Endothelial cell of umbilical vein (primary cell): ENCODE measurements at regions of chr3 and their contacts with region 1.

Region 1: DNA sequence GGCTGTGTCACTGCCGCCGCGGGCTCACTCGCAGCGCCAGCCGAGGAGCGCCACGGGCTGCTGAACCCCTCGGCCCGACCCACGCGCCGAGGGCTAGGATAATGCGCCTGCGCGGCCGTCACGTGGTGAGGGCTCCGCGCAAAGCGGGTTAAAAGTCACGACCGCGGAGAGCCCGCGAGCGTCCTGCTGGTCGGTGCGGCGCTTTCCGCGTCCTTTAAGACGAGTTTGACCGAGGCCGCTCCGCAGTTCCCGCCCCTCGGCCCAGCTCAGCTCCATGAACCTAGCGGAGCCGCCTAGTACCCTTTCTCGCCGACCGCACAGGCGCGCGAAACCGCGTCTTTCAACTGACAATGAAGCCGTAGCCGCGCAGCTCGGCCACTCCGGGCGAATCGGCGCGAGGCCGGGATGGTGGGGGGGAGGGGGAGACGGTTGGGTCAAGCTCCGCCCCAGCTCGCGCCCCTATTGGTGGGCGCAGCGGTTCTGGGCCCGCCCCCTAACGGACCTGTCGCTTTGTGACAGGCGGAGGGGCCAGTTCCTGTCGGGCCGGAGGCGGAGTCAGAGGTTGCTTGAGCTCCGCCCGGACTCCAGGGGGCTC is 636 bp upstream of the STT3B start:
- DNase-seq: peak; percentile 98
- H3K4me3 ChIP-seq: peak overlapping the region; percentile 73 to 94 (median 74)
- H3K27ac ChIP-seq: peak overlapping the region; percentile 90
- H3K4me1 ChIP-seq: peaks cover 24% of the 10 kb centered on the region
- H3K27me3 ChIP-seq: peaks cover 12 to 15% of the 10 kb centered on the region in 2 experiments
- CTCF ChIP-seq: no peak
- POLR2A ChIP-seq: peak; percentile 98

Region 2: DNA sequence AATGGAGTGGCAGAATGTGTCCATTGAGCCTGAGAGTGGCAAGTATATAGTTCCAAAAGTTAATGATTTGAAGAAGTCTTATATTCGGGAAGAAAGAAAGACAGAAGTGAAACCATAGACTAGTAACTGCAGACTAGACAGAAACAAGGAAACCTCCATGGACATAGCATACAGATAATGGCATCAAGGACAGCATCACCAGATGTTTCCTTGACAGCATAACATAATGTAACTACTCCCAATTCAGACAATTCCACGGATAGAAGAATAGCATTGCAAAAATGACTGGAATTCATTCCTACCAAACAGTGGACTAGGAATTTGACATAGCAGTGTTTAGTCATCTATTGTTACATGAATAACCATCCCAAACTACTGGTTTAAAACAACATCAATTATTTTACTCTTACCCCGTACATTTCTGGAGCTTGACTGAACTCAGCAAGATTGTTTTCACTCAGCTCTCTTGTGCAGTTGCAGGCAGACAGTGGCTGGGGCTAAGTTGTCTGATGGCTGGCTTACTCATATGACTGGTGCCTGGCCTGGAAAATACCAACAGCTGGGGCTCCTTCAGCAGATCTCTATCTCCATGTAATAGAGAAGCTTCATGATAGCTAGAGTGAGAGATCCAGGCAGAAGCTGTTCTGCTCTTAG is 527.9 kb before region 1 on chr3:
- CTCF ChIA-PET with region 1: no interaction called
- POLR2A ChIA-PET with region 1: no interaction called
- dilution Hi-C with region 1: no loop called
- intact Hi-C with region 1: loop called (anchors 1 kb)
- DNase-seq: peak; percentile 72
- H3K4me3 ChIP-seq: no peak overlapping the region
- H3K27ac ChIP-seq: peak overlapping the region; percentile 85
- H3K4me1 ChIP-seq: peaks cover 15% of the 10 kb centered on the region
- H3K27me3 ChIP-seq: no peaks in the 10 kb centered on the region
- CTCF ChIP-seq: no peak
- POLR2A ChIP-seq: no peak

Region 3: DNA sequence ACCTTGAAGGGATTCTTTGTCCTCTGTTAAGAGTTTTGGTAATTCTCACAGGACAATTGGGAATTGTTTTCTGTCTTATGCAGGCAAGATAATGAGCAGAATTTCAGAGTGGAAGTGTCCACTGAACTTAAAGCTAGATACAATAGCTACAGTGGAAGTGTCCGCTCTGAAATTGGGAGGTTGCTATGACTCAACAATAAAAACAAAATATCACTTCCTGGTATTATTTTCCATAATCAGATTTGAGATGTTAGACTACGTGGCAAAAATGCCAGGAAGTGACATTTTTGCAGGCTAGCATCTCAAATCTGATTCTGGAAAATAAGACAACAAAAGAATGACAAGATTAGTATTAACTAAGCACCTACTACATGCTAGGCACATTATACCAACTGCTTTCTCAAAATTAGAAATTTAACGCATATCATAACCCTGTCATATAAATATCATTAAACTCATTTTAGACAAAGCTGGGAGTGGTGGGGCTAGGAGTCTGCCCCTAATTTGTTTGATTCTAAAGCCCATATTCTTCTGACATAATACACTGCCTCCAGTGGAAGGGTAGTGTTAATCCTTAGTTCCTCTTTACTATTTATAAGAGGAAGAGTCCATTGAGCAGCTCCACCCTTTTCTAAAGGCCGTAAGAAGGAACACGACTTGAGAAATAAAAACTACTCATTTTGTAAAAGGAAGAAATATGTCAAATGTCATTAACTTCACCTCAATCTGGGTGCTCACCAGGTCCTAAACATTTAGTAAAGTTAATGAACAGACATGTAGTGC is 266.3 kb before region 1 on chr3:
- CTCF ChIA-PET with region 1: interaction called, 8 read pairs
- POLR2A ChIA-PET with region 1: no interaction called
- dilution Hi-C with region 1: no loop called
- intact Hi-C with region 1: loop called (anchors 1 kb)
- DNase-seq: peak; percentile 87
- H3K4me3 ChIP-seq: no peak overlapping the region
- H3K27ac ChIP-seq: peak overlapping the region; percentile 93
- H3K4me1 ChIP-seq: peaks cover 17% of the 10 kb centered on the region
- H3K27me3 ChIP-seq: no peaks in the 10 kb centered on the region
- CTCF ChIP-seq: no peak
- POLR2A ChIP-seq: no peak

Region 4: GRCh38 chr3:31369637-31370379 is 162.3 kb before region 1 on chr3:
- CTCF ChIA-PET with region 1: no interaction called
- POLR2A ChIA-PET with region 1: no interaction called
- dilution Hi-C with region 1: no loop called
- intact Hi-C with region 1: no loop called
- DNase-seq: peak; percentile 24
- H3K4me3 ChIP-seq: no peak overlapping the region
- H3K27ac ChIP-seq: no peak overlapping the region
- H3K4me1 ChIP-seq: no peaks in the 10 kb centered on the region
- H3K27me3 ChIP-seq: no peaks in the 10 kb centered on the region
- CTCF ChIP-seq: no peak
- POLR2A ChIP-seq: no peak

Region 5: DNA sequence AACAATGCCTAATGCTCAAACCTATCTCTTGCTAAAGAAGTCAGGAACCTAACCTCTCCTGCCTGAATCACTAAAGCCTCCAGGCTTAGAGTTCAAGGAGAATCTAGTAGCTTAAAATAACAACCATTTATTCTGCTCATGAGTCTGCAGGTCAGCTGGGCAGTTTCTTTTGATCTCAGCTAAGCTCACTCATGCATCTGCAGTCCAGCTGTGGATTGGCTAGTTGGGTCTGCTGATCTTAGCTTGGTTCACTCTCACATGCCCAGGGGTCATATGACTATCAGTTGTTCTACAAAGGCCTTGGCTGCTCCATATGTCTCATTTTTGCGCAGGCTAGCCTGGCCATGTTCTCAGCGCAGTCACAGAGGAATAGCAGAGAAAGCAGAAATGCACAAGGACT is 108.6 kb before region 1 on chr3:
- CTCF ChIA-PET with region 1: no interaction called
- POLR2A ChIA-PET with region 1: no interaction called
- dilution Hi-C with region 1: no loop called
- intact Hi-C with region 1: no loop called
- DNase-seq: no peak
- H3K4me3 ChIP-seq: no peak overlapping the region
- H3K27ac ChIP-seq: no peak overlapping the region
- H3K4me1 ChIP-seq: no peaks in the 10 kb centered on the region
- H3K27me3 ChIP-seq: peaks cover 0 to 2% of the 10 kb centered on the region in 2 experiments
- CTCF ChIP-seq: no peak
- POLR2A ChIP-seq: no peak

Region 6: DNA sequence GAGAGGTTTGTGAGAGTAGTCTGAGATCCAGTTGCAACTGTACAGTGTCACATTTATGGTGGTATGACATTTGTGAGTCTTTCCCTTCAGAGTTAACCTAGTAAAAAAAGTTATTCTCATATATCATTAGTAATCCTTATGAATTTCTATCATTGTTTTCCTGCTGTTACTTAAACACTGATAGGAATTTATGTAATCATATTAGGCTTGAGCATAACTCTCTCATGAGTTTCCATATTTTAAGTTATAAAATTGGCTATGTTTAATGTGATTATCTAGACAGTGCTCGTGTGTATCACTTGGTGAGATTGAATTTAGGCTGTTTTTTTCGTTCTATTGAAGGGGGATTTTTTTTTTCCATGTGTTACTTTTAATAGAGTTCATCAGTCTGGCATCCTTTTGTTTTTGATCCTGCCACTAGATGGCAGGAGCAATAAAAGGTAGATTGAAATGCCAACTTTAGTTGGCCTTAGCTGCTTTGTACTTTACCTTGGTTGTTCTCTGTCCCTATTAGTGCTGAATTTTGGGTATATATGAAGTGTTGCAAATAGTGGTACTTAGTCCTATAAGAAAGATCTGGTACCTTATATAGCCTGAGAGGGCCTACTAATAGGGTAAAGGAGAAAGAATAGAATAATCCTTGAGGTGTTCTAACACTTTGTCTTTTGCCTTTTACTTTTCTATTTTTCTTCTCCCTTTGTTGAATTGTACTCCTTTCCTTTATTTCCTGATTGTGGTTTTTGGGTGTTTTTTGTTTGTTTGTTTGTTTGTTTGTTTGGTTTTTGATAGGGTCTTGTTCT is 18.6 kb after region 1 on chr3:
- CTCF ChIA-PET with region 1: interaction called, 15 read pairs
- POLR2A ChIA-PET with region 1: no interaction called
- dilution Hi-C with region 1: no loop called
- intact Hi-C with region 1: no loop called
- DNase-seq: peak; percentile 60
- H3K4me3 ChIP-seq: no peak overlapping the region
- H3K27ac ChIP-seq: no peak overlapping the region
- H3K4me1 ChIP-seq: no peaks in the 10 kb centered on the region
- H3K27me3 ChIP-seq: no peaks in the 10 kb centered on the region
- CTCF ChIP-seq: peak; percentile 42 to 57
- POLR2A ChIP-seq: no peak

Region 7: GRCh38 chr3:31733234-31733667 is 201.2 kb after region 1 on chr3:
- CTCF ChIA-PET with region 1: no interaction called
- POLR2A ChIA-PET with region 1: no interaction called
- dilution Hi-C with region 1: no loop called
- intact Hi-C with region 1: no loop called
- DNase-seq: peak; percentile 75
- H3K4me3 ChIP-seq: no peak overlapping the region
- H3K27ac ChIP-seq: no peak overlapping the region
- H3K4me1 ChIP-seq: peaks cover 3% of the 10 kb centered on the region
- H3K27me3 ChIP-seq: no peaks in the 10 kb centered on the region
- CTCF ChIP-seq: no peak
- POLR2A ChIP-seq: no peak

Region 8: DNA sequence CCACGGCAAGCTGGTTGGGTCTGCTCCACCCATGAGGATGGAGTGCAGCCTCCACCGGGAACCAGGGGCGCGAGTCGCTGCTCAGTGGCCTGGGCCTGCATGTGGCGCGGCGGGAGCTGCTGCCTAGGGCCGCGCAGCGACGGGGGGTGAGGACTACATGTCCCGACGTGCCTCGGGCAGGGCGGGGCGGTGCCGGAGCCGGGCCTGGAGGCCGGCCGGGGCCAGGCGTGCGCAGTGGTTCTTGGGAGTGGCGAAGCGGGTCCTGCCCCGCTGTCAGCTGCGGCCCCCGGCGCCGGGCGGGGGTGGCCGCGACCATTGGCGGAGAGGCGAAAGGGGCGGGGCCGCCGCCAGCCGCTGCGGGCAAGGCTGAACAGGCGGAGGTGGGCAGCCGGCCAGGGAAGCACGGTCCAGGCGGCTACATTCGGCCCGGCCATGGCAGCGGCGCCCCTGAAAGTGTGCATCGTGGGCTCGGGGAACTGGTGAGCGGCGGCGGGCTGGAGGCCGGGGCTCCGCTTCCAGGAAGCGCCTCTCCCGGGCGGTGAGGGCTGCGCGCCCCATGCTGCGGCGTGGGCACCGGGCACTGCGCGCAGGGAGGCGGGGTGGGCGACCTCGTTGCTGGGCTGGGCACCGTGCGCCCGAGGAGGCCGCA is 574.3 kb after region 1 on chr3 and contains the start of gene GPD1L:
- CTCF ChIA-PET with region 1: no interaction called
- POLR2A ChIA-PET with region 1: no interaction called
- dilution Hi-C with region 1: no loop called
- intact Hi-C with region 1: loop called (anchors 1 kb)
- DNase-seq: peak; percentile 97
- H3K4me3 ChIP-seq: peak within 1 kb of the TSS; percentile 63 to 65 (median 63)
- H3K27ac ChIP-seq: no peak within 1 kb of the TSS
- H3K4me1 ChIP-seq: peaks cover 17% of the 10 kb centered on the region
- H3K27me3 ChIP-seq: no peaks in the 10 kb centered on the region
- CTCF ChIP-seq: no peak
- POLR2A ChIP-seq: peak; percentile 34
- total RNA-seq, gene GPD1L: 11.3 and 12.9 TPM in 2 replicates